ENCODE measurements at regions of chr12 and their contacts with region 1.

Region 1: GRCh38 chr12:4251216-4251891 is 22.2 kb upstream of the CCND2 start:
- DNase-seq: peak; percentile 69
- H3K4me3 Mint-ChIP-seq: peak overlapping the region; percentile 8
- H3K27ac Mint-ChIP-seq: peak overlapping the region; percentile 74
- H3K4me1 Mint-ChIP-seq: peaks cover 17% of the 10 kb centered on the region
- H3K27me3 Mint-ChIP-seq: no peaks in the 10 kb centered on the region

Region 2: GRCh38 chr12:4178424-4179170 is 72.8 kb before region 1 on chr12:
- CTCF ChIA-PET with region 1: no interaction called
- intact Hi-C with region 1: loop called (anchors 2 kb)
- DNase-seq: peak; percentile 64
- H3K4me3 Mint-ChIP-seq: peak overlapping the region; percentile 14
- H3K27ac Mint-ChIP-seq: peak overlapping the region; percentile 87
- H3K4me1 Mint-ChIP-seq: peaks cover 21% of the 10 kb centered on the region
- H3K27me3 Mint-ChIP-seq: no peaks in the 10 kb centered on the region

Region 3: GRCh38 chr12:4240161-4240783 is 11.1 kb before region 1 on chr12:
- CTCF ChIA-PET with region 1: no interaction called
- intact Hi-C with region 1: no loop called
- DNase-seq: no peak
- H3K4me3 Mint-ChIP-seq: no peak overlapping the region
- H3K27ac Mint-ChIP-seq: no peak overlapping the region
- H3K4me1 Mint-ChIP-seq: peaks cover 5% of the 10 kb centered on the region
- H3K27me3 Mint-ChIP-seq: peaks cover 8% of the 10 kb centered on the region

Region 4: GRCh38 chr12:4269279-4269991 is 18.1 kb after region 1 on chr12:
- CTCF ChIA-PET with region 1: interaction called, 3 read pairs
- intact Hi-C with region 1: loop called (anchors 1 kb)
- DNase-seq: peak; percentile 99
- H3K4me3 Mint-ChIP-seq: peak overlapping the region; percentile 99
- H3K27ac Mint-ChIP-seq: peak overlapping the region; percentile 99
- H3K4me1 Mint-ChIP-seq: peaks cover 20% of the 10 kb centered on the region
- H3K27me3 Mint-ChIP-seq: no peaks in the 10 kb centered on the region

Measured in activated naive CD4-positive, alpha-beta T cell treated with anti-CD3 and anti-CD28 coated beads for 36 hours (primary cell).